CD4-positive, alpha-beta T cell (primary cell): ENCODE measurements at regions of chr11 and their contacts with region 1.

Region 1: DNA sequence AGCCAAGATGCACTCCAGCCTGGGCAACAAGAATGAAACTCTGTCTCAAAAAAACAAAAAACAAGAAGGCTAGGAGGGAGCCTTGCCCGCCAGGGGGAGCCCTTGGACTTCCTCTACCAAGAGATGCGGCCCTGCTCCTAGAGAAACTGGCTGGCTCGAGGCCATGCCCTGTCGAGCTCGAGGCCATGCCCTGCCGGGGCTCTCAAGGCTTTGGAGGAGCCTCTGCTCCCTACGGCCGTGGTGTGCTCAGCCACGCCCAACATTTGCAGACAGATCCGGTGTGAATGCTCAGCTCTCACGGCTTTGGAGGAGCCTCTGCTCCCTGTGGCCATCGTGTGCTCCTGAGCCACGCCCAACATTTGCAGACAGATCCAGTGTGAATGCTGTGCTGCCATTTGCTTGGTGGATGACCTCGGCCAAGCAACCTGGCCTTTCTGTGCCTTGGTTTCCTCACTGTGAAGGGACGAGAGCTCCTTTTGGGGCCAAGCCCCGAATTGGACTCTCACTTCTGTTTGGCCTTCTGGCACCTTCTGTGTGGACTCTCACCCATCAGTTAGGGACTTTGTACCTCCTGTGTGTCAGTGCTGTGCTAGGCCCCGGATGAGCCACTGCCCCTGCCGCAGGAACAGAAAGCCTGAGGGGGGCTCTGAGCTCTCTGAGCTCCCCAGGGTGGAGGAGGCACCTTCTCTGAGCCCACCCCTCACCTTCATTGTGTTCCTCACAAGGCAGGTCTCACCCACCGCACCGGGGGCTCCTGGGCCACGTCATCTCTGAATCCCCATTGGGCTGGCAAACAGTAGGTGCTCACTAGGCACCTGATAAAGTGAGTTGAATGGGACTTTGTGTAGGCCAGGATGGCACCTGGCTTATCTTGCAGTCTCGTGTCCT is 14.1 kb downstream of the C11orf24 start:
- DNase-seq: peak; percentile 88 to 98 (median 92)
- ATAC-seq: peak; percentile 96
- H3K4me3 ChIP-seq: no peak overlapping the region
- H3K4me3 Mint-ChIP-seq: no peak overlapping the region
- H3K27ac ChIP-seq: no peak overlapping the region
- H3K27ac Mint-ChIP-seq: no peak overlapping the region
- H3K4me1 ChIP-seq: peaks cover 14% of the 10 kb centered on the region
- H3K4me1 Mint-ChIP-seq: peaks cover 5% of the 10 kb centered on the region
- H3K27me3 ChIP-seq: no peaks in the 10 kb centered on the region
- H3K27me3 Mint-ChIP-seq: no peaks in the 10 kb centered on the region
- CTCF ChIP-seq: peak; percentile 81

Region 2: DNA sequence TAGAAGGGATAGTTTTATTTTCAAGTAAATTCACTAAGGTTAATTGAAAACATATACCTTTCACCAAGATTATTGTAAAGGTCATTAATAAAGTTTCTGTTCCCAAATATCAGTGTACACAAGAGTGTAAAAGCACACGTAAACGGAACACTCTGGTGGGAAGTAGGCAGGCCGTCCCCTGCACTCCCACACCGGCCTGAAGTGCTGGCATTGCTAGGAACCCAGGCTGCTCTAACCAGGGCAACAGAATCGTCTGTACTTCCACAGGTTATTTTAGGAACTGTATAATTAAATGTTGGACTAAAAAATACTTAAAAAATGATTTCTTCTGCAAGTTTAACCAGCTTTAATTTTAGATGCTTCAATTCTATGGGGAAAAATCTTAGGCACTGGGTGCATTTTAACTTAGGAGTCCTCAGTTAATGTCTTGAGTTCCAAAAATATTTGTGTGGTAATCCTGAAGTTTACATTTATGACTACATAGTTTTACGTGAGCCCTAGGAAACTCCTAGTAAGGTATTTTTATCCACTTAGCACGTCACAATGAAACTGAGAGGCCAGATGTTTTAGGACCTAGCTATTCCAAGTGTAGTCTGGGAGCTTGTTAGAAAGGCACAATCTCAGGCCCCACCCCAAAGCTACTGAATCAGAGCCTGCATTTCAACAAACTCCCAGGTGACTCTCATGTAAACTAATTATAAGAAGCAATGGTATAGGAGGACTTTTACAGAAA is 75.8 kb before region 1 on chr11:
- CTCF ChIA-PET with region 1: no interaction called
- POLR2A ChIA-PET with region 1: no interaction called
- intact Hi-C with region 1: no loop called
- DNase-seq: no peak
- ATAC-seq: no peak
- H3K4me3 ChIP-seq: no peak overlapping the region
- H3K4me3 Mint-ChIP-seq: no peak overlapping the region
- H3K27ac ChIP-seq: no peak overlapping the region
- H3K27ac Mint-ChIP-seq: no peak overlapping the region
- H3K4me1 ChIP-seq: no peaks in the 10 kb centered on the region
- H3K4me1 Mint-ChIP-seq: peaks cover 5% of the 10 kb centered on the region
- H3K27me3 ChIP-seq: no peaks in the 10 kb centered on the region
- H3K27me3 Mint-ChIP-seq: no peaks in the 10 kb centered on the region
- CTCF ChIP-seq: no peak

Region 3: GRCh38 chr11:68383976-68384501 is 126.3 kb after region 1 on chr11:
- CTCF ChIA-PET with region 1: no interaction called
- POLR2A ChIA-PET with region 1: no interaction called
- intact Hi-C with region 1: loop called (anchors 1 to 5 kb)
- DNase-seq: peak; percentile 43 to 74 (median 54)
- ATAC-seq: peak; percentile 52
- H3K4me3 ChIP-seq: no peak overlapping the region
- H3K4me3 Mint-ChIP-seq: no peak overlapping the region
- H3K27ac ChIP-seq: no peak overlapping the region
- H3K27ac Mint-ChIP-seq: no peak overlapping the region
- H3K4me1 ChIP-seq: peaks cover 12% of the 10 kb centered on the region
- H3K4me1 Mint-ChIP-seq: peaks cover 11% of the 10 kb centered on the region
- H3K27me3 ChIP-seq: no peaks in the 10 kb centered on the region
- H3K27me3 Mint-ChIP-seq: no peaks in the 10 kb centered on the region
- CTCF ChIP-seq: peak; percentile 97

Region 4: DNA sequence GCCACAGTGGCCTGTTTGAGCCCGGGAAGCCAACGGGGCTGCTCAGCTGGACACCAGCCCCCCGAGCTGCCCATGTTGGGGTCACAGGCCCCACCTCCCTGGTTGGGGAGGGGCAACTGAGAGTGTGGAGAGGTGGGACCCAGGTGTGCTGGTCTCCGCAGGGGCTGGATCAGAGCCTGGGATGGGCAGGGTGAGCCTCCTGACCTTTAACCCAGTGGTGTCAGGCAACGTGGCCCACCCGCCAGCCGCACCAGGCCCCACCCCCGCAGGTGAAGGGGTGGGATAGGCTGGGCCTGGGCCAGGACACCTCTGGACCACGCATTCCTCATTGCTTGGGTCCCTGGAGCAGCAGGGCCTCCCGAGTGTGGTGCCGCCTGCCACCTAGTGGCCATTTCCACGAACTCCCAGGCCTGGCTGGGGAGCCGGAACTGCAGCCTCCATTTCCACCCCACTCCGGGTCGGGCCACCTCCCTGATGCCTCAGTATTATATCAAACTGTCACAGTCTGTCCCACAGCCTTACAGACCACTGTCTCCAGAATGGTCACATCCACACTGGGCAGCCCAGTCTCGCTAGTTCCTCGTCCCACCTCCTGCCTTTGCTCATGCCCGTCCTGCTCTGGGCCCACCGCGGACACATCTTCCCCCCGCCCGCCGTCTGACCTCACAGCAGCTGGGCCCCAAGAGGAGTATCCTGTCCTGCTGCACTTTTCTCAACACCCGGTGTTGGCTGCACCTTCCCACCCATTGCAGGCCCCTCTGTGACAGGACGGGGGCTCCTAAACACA is 189.5 kb after region 1 on chr11:
- CTCF ChIA-PET with region 1: no interaction called
- POLR2A ChIA-PET with region 1: no interaction called
- intact Hi-C with region 1: loop called (anchors 1 kb)
- DNase-seq: peak; percentile 66 to 87 (median 73)
- ATAC-seq: peak; percentile 100
- H3K4me3 ChIP-seq: no peak overlapping the region
- H3K4me3 Mint-ChIP-seq: no peak overlapping the region
- H3K27ac ChIP-seq: no peak overlapping the region
- H3K27ac Mint-ChIP-seq: no peak overlapping the region
- H3K4me1 ChIP-seq: peaks cover 10% of the 10 kb centered on the region
- H3K4me1 Mint-ChIP-seq: no peaks in the 10 kb centered on the region
- H3K27me3 ChIP-seq: no peaks in the 10 kb centered on the region
- H3K27me3 Mint-ChIP-seq: no peaks in the 10 kb centered on the region
- CTCF ChIP-seq: peak; percentile 82

Region 5: DNA sequence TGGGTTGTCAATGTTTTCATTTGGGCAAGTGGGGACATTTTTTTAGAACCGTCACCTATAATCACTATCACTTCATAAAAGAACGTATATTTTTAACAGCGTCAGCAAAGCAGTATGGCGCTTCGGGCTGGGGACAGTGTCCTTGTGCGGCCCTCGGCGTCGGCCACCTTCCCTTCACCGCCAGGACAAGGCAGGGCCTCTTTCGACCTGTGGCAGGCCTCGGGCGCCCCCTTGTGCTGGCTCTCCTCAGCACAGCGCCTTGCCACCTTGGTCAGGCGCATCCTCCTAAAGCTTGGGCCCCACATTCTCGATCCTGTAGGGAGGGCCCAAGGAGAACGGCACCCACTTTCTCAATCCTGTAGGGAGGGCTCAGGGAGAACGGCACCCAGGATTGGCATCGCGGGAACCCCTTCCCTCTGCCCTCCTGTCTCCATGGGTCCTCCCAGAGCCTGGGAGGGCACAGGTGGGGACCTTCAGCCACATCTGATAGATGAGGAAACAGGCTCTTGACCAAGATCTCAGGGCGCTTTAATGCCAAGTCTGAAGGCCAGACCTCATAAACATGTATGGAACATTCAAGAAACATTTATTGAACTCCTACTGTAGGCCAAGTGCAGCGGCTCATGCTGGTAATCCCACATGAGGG is 1933.9 kb after region 1 on chr11:
- CTCF ChIA-PET with region 1: no interaction called
- POLR2A ChIA-PET with region 1: no interaction called
- intact Hi-C with region 1: no loop called
- DNase-seq: peak; percentile 15 to 69 (median 35)
- ATAC-seq: peak; percentile 55
- H3K4me3 ChIP-seq: no peak overlapping the region
- H3K4me3 Mint-ChIP-seq: no peak overlapping the region
- H3K27ac ChIP-seq: no peak overlapping the region
- H3K27ac Mint-ChIP-seq: no peak overlapping the region
- H3K4me1 ChIP-seq: peaks cover 7% of the 10 kb centered on the region
- H3K4me1 Mint-ChIP-seq: no peaks in the 10 kb centered on the region
- H3K27me3 ChIP-seq: peaks cover 4 to 13% of the 10 kb centered on the region in 2 experiments
- H3K27me3 Mint-ChIP-seq: peaks cover 16% of the 10 kb centered on the region
- CTCF ChIP-seq: peak; percentile 58